Ovary (tissue), 10 donors: ENCODE measurements at regions of chr2 and their contacts with region 1.

Region 1: GRCh38 chr2:15955295-15956166 is 15.2 kb downstream of the MYCN start:
- DNase-seq: no peak
- H3K4me3 ChIP-seq: no peak overlapping the region
- H3K27ac ChIP-seq: no peak overlapping the region
- H3K4me1 ChIP-seq: no peaks in the 10 kb centered on the region
- H3K27me3 ChIP-seq: no peaks in the 10 kb centered on the region
- CTCF ChIP-seq: no peak
- EP300 ChIP-seq: no peak
- POLR2A ChIP-seq: no peak

Region 2: DNA sequence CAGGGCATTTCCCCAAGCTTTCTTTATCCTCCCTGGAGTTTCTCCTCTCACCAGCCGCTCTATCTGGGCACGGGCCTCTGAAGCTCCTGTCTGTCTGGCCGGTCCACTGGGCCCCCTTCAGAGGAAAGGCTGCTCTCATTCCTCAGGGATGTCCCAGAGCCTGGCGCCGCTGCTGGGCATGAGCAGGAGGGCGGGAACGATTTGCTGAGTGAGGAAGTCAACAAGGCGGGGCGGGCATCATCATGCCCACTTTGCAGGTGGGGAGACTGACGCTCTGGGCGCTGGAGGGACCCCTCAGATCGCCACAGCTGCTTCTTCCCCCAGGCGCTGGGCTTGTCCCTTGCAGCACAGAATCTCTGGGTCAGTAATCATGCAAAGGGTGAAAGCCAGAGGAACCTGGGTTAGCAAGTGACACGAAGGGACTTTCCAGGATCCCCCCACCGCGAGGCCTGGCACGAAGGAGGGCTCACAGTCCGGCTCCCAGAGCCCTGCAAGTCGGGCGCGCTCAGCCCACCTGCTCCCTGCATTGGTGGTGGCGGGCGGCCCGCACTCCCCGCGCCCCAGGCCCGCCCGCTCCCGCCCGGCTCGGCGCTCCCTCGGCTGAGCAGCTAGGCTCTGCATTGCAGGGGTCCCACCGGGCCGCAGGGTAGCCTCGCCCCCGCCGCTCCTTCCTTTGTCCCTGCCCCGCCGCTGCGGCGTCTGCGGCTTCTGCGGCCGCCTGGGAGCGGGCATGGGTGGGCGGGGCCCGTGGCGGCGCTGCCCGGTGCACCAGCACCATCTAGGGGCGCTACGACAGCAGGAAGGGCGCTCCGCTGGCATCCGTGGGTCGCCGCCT is 552.3 kb after region 1 on chr2:
- intact Hi-C with region 1: loop called in 1 of 4 experiments (anchors 10 kb)
- DNase-seq: peak; percentile 19 to 67 (median 42)
- H3K4me3 ChIP-seq: no peak overlapping the region
- H3K27ac ChIP-seq: no peak overlapping the region
- H3K4me1 ChIP-seq: no peaks in the 10 kb centered on the region
- H3K27me3 ChIP-seq: no peaks in the 10 kb centered on the region
- CTCF ChIP-seq: peak in 2 of 3 donors; percentile 45 to 49
- EP300 ChIP-seq: no peak
- POLR2A ChIP-seq: no peak

Region 3: GRCh38 chr2:16546128-16546754 is 590.7 kb after region 1 on chr2:
- intact Hi-C with region 1: no loop called
- DNase-seq: no peak
- H3K4me3 ChIP-seq: no peak overlapping the region
- H3K27ac ChIP-seq: no peak overlapping the region
- H3K4me1 ChIP-seq: no peaks in the 10 kb centered on the region
- H3K27me3 ChIP-seq: no peaks in the 10 kb centered on the region
- CTCF ChIP-seq: no peak
- EP300 ChIP-seq: no peak
- POLR2A ChIP-seq: no peak